ENCODE measurements at regions of chr11 and their contacts with region 1.

Region 1: GRCh38 chr11:10514210-10514609 is 26.8 kb downstream of the RNF141 start:
- DNase-seq: no peak
- ATAC-seq: no peak
- H3K4me3 ChIP-seq: no peak overlapping the region
- H3K27ac ChIP-seq: no peak overlapping the region
- H3K4me1 ChIP-seq: no peaks in the 10 kb centered on the region
- H3K27me3 ChIP-seq: no peaks in the 10 kb centered on the region
- CTCF ChIP-seq: no peak; a peak in 1 of 6 replicates
- EP300 ChIP-seq: no peak
- POLR2A ChIP-seq: no peak
- RAD21 ChIP-seq: no peak

Region 2: GRCh38 chr11:10366568-10367370 is 147.4 kb before region 1 on chr11:
- CTCF ChIA-PET with region 1: no interaction called
- POLR2A ChIA-PET with region 1: no interaction called
- RAD21 ChIA-PET with region 1: no interaction called
- SMC1A ChIA-PET with region 1: no interaction called
- in situ Hi-C with region 1: no loop called
- intact Hi-C with region 1: no loop called
- DNase-seq: peak; percentile 57
- ATAC-seq: peak; percentile 98
- H3K4me3 ChIP-seq: no peak overlapping the region
- H3K27ac ChIP-seq: no peak overlapping the region
- H3K4me1 ChIP-seq: no peaks in the 10 kb centered on the region; the same call in 1 of the 2 replicates
- H3K27me3 ChIP-seq: no peaks in the 10 kb centered on the region
- CTCF ChIP-seq: peak; percentile 85 to 92 (median 91)
- EP300 ChIP-seq: peak in 1 of 2 experiments; percentile 37; a peak in 1 of 4 replicates
- POLR2A ChIP-seq: no peak
- RAD21 ChIP-seq: peak; percentile 75

Region 3: DNA sequence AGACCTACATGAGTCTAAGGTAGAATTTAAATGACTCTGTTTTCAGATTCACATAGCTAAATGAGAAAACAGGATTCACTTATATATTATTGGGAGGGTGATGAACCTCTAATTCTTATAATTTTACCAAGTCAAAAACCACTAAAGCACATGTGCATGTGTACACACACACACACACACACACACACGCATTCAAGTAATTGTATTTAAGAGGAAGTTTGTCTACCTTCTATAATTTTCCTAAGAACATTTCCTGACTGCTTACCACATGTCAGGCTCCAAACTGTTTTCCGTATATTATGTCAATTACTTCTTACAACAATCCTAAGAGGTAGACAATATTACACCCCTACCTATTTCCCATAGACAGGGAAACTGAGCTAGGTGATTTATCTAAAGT is 20.1 kb after region 1 on chr11:
- CTCF ChIA-PET with region 1: interaction called, 10 read pairs
- POLR2A ChIA-PET with region 1: no interaction called
- RAD21 ChIA-PET with region 1: no interaction called
- SMC1A ChIA-PET with region 1: interaction called, 5 read pairs
- in situ Hi-C with region 1: no loop called
- intact Hi-C with region 1: no loop called
- DNase-seq: no peak
- ATAC-seq: no peak
- H3K4me3 ChIP-seq: no peak overlapping the region
- H3K27ac ChIP-seq: no peak overlapping the region
- H3K4me1 ChIP-seq: no peaks in the 10 kb centered on the region
- H3K27me3 ChIP-seq: no peaks in the 10 kb centered on the region; a peak in 1 of 4 replicates
- CTCF ChIP-seq: no peak
- EP300 ChIP-seq: no peak
- POLR2A ChIP-seq: no peak
- RAD21 ChIP-seq: no peak

Measured in GM12878 (cell line).